A549 (cell line): ENCODE measurements at regions of chr12 and their contacts with region 1.

Region 1: DNA sequence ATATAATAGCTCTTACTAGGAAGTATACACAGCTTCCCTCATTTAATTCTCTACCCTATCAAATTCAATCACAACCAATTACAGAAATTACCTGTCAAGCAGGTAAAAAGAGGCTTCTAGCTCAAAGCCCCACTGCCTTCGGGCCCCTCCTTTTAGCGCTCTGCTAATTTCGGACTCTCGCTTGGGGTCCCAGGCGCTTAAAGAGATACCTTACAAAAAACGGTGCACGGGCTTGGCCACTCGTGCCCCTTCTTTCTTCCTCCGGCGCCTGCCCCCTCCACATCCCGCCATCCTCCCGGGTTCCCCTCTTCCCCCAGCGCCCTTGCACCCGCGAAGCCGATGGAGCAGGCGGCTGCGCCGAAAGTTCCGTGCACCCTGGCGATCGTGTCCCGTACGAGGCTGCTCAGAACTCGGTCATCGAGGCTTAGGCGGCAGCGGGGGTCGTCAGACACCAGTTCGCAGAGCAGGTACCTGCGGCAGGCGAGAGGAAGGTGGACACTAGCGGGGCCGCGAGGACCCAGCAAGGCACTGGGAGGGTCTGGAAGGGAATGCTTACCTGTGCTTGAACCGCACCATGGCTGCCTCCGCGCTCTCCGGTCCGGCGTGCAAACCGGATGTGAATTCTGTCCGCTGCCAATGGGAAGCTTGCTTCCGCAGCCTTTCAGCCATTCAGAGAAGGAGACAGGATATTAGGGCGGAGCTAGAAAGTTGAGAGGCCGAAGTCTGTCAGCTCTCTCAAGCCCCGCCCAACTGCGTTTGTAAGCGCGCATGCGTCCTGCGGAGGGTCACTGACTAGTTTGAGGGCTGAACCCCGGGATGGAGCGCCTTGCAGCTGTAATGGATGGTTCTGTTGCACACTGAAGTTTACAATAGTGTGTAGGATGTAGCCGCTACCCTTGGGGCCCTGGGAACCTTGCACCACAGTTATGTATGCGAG is at the start of gene POP5:
- DNase-seq: peak; percentile 93 to 98
- ATAC-seq: peak; percentile 88 to 95
- H3K4me3 ChIP-seq: peak within 1 kb of the TSS; percentile 82
- H3K27ac ChIP-seq: peak within 1 kb of the TSS; percentile 85 to 86
- H3K4me1 ChIP-seq: peaks cover 7% of the 10 kb centered on the region; the same call in 2 of the 3 replicates
- CTCF ChIP-seq: no peak
- EP300 ChIP-seq: no peak
- POLR2A ChIP-seq: peak; percentile 88
- RAD21 ChIP-seq: no peak; a peak in 1 of 5 replicates
- polyA plus RNA-seq, gene POP5: 111 and 133 TPM in 2 replicates

Region 2: GRCh38 chr12:120686690-120687577 is 105.9 kb after region 1 on chr12 and contains the start of gene MLEC:
- CTCF ChIA-PET with region 1: interaction called, 10 read pairs
- POLR2A ChIA-PET with region 1: interaction called, 5 read pairs
- DNase-seq: peak; percentile 98 to 99
- ATAC-seq: peak; percentile 89 to 91
- H3K4me3 ChIP-seq: peak within 1 kb of the TSS; percentile 97
- H3K27ac ChIP-seq: peak within 1 kb of the TSS; percentile 92 to 94
- H3K4me1 ChIP-seq: peaks cover 44% of the 10 kb centered on the region
- CTCF ChIP-seq: no peak
- EP300 ChIP-seq: no peak
- POLR2A ChIP-seq: peak; percentile 85
- RAD21 ChIP-seq: peak in 1 of 2 experiments; percentile 40; a peak in 3 of 5 replicates
- polyA plus RNA-seq, gene MLEC: 89.1 and 140 TPM in 2 replicates

Region 3: GRCh38 chr12:120710031-120710804 is 129.2 kb after region 1 on chr12 and contains the start of gene UNC119B:
- CTCF ChIA-PET with region 1: interaction called, 30 read pairs
- POLR2A ChIA-PET with region 1: no interaction called
- DNase-seq: peak; percentile 52 to 79
- ATAC-seq: peak; percentile 87 to 89
- H3K4me3 ChIP-seq: peak within 1 kb of the TSS; percentile 75
- H3K27ac ChIP-seq: peak within 1 kb of the TSS; percentile 85 to 96
- H3K4me1 ChIP-seq: peaks cover 20% of the 10 kb centered on the region
- CTCF ChIP-seq: no peak
- EP300 ChIP-seq: no peak
- POLR2A ChIP-seq: peak; percentile 82
- RAD21 ChIP-seq: no peak
- polyA plus RNA-seq, gene UNC119B: 37.5 and 41.5 TPM in 2 replicates

Region 4: GRCh38 chr12:120978296-120979219 is 397.5 kb after region 1 on chr12 and contains the start of gene HNF1A:
- CTCF ChIA-PET with region 1: interaction called, 64 read pairs
- POLR2A ChIA-PET with region 1: no interaction called
- DNase-seq: peak in 1 of 2 experiments; percentile 67
- ATAC-seq: peak; percentile 25 to 57; a peak in 5 of 6 replicates
- H3K4me3 ChIP-seq: peak within 1 kb of the TSS; percentile 57
- H3K27ac ChIP-seq: peak within 1 kb of the TSS; percentile 96 to 98
- H3K4me1 ChIP-seq: peaks cover 62% of the 10 kb centered on the region
- CTCF ChIP-seq: no peak
- EP300 ChIP-seq: 0 out of 5 replicates have a peak, but pooled peaks of 1 of the 2 experiments have one; percentile 14
- POLR2A ChIP-seq: peak; percentile 18; the same call in 1 of the 2 replicates
- RAD21 ChIP-seq: 0 out of 5 replicates have a peak, but pooled peaks of 1 of the 2 experiments have one; percentile 18
- polyA plus RNA-seq, gene HNF1A: 2.6 and 4.0 TPM in 2 replicates

Region 5: GRCh38 chr12:121223292-121224285 is 642.5 kb after region 1 on chr12:
- CTCF ChIA-PET with region 1: no interaction called
- POLR2A ChIA-PET with region 1: no interaction called
- DNase-seq: peak in 1 of 2 experiments; percentile 39
- ATAC-seq: peak; percentile 45 to 79; a peak in 4 of 6 replicates
- H3K4me3 ChIP-seq: no peak overlapping the region
- H3K27ac ChIP-seq: no peak overlapping the region
- H3K4me1 ChIP-seq: no peaks in the 10 kb centered on the region
- CTCF ChIP-seq: no peak
- EP300 ChIP-seq: no peak
- POLR2A ChIP-seq: no peak
- RAD21 ChIP-seq: 0 out of 5 replicates have a peak, but pooled peaks of 1 of the 2 experiments have one; percentile 24